Thyroid gland (tissue), 4 donors: ENCODE measurements at regions of chr3 and their contacts with region 1.

Region 1: DNA sequence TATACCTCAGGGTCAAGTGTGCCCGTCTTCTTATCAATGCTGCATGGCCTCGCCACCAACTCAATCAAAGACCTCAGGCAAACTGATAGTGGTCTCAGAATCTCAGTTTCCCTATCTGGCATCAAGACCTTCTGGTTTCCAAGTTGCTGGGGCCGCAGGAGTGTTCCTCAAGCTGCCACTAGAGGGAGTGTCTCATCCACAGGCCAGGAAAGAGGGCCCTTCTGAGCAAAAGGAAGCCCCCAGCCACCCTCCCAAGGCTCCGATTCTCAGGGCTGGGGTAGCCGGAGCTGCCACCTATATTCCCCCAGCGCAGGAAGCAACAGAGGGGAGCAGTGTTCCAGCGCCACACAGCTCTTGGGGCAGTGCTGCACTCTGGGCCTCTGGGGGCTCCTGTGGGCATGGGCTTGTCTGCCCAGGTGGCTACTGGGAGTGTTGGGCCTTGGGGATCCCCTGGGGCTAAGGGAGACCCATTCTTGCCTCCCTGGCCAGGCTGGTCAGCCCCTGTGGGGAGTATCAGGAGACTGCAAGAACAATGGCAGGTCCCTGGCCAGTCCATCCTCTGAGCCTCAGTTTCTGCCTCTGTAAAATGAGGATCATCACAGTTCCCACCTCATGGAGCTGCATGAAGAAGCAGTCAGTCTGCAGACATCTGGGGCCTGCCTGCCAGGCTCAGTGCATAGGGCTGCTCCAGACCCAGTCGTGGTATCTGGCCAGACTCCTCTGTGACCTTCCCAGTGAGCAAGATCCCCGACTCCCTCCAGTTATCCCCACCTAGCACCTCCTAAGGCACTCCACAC is 23.4 kb upstream of the SEC13 start:
- DNase-seq: peak; percentile 14 to 44
- H3K4me3 ChIP-seq: no peak overlapping the region
- H3K27ac ChIP-seq: no peak overlapping the region
- H3K4me1 ChIP-seq: no peaks in the 10 kb centered on the region
- H3K27me3 ChIP-seq: no peaks in the 10 kb centered on the region
- CTCF ChIP-seq: peak; percentile 46 to 89 (median 74)
- POLR2A ChIP-seq: no peak

Region 2: GRCh38 chr3:9324944-9325343 is 1019.4 kb before region 1 on chr3:
- intact Hi-C with region 1: no loop called
- DNase-seq: no peak
- H3K4me3 ChIP-seq: no peak overlapping the region
- H3K27ac ChIP-seq: no peak overlapping the region
- H3K4me1 ChIP-seq: no peaks in the 10 kb centered on the region
- H3K27me3 ChIP-seq: no peaks in the 10 kb centered on the region
- CTCF ChIP-seq: no peak
- POLR2A ChIP-seq: no peak

Region 3: DNA sequence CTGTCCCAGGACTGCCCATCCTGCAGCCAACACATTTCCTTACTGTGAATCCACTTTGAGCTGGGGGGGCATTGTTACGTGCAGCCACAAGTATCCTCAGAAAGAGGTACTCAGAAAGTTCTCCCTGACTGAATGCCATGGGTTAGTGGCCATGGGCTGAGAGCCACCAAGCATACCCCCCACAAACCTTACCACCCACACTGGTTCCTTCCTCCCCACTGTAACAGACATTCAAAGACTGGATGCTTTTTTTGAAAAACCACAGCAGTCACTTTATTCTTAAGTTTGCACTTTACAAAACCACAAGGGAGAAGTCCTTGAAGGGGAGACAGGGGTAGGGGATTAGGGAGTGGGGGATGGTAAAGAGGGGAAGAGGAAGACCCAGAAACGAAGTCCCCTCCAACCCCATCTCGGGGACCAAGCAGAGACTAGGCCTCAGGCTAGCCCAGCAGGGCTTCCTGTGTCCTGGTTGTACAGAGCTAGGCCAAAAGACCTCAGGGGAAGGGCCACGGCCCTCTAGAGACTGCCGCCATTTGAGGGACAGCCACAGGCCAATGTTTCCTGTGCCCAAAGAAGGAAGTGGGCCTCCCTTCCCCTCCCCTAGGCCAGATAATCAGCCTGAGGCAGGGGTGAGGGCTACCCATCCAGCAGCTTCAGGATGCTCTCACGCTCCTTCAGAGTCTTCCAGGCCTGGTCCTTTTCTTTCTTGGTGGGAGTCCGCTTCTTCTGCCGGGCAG is 564.5 kb before region 1 on chr3:
- intact Hi-C with region 1: no loop called
- DNase-seq: peak; percentile 82 to 89
- H3K4me3 ChIP-seq: no peak overlapping the region
- H3K27ac ChIP-seq: peak overlapping the region; percentile 40 to 76 (median 49)
- H3K4me1 ChIP-seq: peaks cover 0 to 45% of the 10 kb centered on the region in 2 donors
- H3K27me3 ChIP-seq: no peaks in the 10 kb centered on the region
- CTCF ChIP-seq: no peak
- POLR2A ChIP-seq: no peak

Region 4: DNA sequence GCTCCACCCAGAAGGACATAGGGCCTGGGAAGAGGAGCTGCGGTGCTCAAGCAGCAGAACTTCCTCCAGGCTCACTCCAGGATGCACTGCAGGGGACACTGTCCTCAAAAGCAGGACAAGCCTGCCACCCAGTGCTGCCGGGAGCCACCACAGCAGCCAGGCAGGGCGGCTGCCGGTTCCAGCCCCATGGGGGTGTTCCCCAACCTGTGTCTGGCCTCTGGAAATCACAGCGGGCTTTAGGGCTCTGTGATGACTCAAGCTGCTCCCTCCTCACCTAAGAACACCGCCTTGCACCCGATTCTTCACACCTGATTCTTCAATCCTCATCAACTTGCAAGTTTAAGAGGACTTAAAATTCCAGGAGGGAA is 399.7 kb after region 1 on chr3:
- intact Hi-C with region 1: loop called (anchors 5 kb)
- DNase-seq: no peak
- H3K4me3 ChIP-seq: no peak overlapping the region
- H3K27ac ChIP-seq: no peak overlapping the region
- H3K4me1 ChIP-seq: no peaks in the 10 kb centered on the region
- H3K27me3 ChIP-seq: no peaks in the 10 kb centered on the region
- CTCF ChIP-seq: no peak
- POLR2A ChIP-seq: no peak